Mammary epithelial cell (primary cell): ENCODE measurements at regions of chr2 and their contacts with region 1.

Region 1: GRCh38 chr2:240725671-240726070 is 34.0 kb downstream of the AQP12A start:
- DNase-seq: no peak
- H3K4me3 ChIP-seq: no peak overlapping the region
- H3K27ac ChIP-seq: no peak overlapping the region
- H3K4me1 ChIP-seq: no peaks in the 10 kb centered on the region
- H3K27me3 ChIP-seq: peaks cover 3% of the 10 kb centered on the region
- CTCF ChIP-seq: no peak

Region 2: GRCh38 chr2:240468303-240469238 is 257.1 kb before region 1 on chr2:
- CTCF ChIA-PET with region 1: no interaction called
- dilution Hi-C with region 1: no loop called
- in situ Hi-C with region 1: no loop called
- intact Hi-C with region 1: no loop called
- DNase-seq: no peak
- H3K4me3 ChIP-seq: no peak overlapping the region
- H3K27ac ChIP-seq: no peak overlapping the region
- H3K4me1 ChIP-seq: no peaks in the 10 kb centered on the region
- H3K27me3 ChIP-seq: no peaks in the 10 kb centered on the region
- CTCF ChIP-seq: no peak

Region 3: DNA sequence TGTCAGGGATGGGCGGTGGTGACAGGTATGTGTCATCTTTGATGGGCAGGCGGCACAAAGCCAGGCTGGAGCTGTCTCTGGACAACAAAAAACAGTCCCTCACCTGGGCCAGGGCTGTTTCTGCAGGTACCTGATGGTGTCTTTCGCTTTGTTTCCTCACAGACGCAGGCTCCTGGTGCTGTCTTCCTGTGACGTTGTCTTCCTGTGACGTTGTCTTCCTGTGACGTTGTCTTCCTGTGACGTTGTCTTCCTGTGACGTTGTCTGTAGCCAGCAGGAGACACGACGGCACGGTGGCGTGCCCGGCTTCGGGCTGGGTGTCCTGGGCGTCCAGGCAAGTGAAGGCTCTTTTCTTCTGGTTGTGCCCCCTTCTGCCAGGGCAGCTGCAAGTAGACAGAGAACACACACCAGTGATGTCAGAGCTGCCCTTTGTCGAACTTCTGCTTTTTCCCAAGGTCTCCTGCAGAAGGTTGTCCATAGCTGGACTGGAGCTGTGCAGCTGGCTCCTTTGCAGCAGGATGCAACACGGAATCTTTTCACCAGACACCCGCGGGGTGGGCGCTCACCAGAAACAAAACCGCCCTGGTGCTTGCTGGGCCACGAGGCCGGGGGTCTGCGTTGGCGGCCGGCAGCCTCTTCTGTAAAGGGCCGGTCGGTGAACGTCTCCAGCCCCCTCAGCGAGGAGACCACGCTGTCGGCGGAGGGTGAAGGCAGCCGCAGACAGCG is 79.3 kb before region 1 on chr2:
- CTCF ChIA-PET with region 1: no interaction called
- dilution Hi-C with region 1: loop called (anchors 5 kb)
- in situ Hi-C with region 1: no loop called
- intact Hi-C with region 1: no loop called
- DNase-seq: no peak
- H3K4me3 ChIP-seq: no peak overlapping the region
- H3K27ac ChIP-seq: no peak overlapping the region
- H3K4me1 ChIP-seq: no peaks in the 10 kb centered on the region
- H3K27me3 ChIP-seq: peaks cover 11% of the 10 kb centered on the region
- CTCF ChIP-seq: no peak

Region 4: DNA sequence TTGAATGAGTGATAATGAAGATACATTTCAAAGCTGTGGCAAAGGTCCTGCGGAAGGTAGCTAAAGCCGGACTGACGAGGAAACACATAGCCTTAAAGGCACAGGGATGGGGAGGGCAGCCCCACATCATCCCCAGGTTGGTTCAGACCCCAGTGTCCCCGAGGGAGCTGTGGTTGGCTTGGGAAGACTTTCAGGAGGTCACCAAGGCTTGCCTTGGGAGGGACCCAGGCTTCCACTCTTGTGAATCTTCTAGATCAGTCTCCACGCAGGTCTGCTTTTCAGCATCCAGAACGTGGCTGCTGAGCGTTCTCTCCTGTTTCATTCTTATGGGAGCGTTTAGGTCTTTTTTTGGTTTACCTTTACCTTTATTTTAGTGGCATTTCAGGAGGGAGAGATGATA is 77.5 kb after region 1 on chr2:
- CTCF ChIA-PET with region 1: no interaction called
- dilution Hi-C with region 1: loop called (anchors 5 kb)
- in situ Hi-C with region 1: no loop called
- intact Hi-C with region 1: no loop called
- DNase-seq: no peak
- H3K4me3 ChIP-seq: no peak overlapping the region
- H3K27ac ChIP-seq: no peak overlapping the region
- H3K4me1 ChIP-seq: no peaks in the 10 kb centered on the region
- H3K27me3 ChIP-seq: peaks cover 12% of the 10 kb centered on the region
- CTCF ChIP-seq: no peak